ENCODE measurements at regions of chr16 and their contacts with region 1.

Region 1: GRCh38 chr16:49876716-49877129 is 20.8 kb upstream of the ZNF423 start:
- DNase-seq: no peak
- H3K4me3 ChIP-seq: no peak overlapping the region
- H3K27me3 ChIP-seq: peaks cover 13% of the 10 kb centered on the region
- CTCF ChIP-seq: peak; percentile 79

Region 2: DNA sequence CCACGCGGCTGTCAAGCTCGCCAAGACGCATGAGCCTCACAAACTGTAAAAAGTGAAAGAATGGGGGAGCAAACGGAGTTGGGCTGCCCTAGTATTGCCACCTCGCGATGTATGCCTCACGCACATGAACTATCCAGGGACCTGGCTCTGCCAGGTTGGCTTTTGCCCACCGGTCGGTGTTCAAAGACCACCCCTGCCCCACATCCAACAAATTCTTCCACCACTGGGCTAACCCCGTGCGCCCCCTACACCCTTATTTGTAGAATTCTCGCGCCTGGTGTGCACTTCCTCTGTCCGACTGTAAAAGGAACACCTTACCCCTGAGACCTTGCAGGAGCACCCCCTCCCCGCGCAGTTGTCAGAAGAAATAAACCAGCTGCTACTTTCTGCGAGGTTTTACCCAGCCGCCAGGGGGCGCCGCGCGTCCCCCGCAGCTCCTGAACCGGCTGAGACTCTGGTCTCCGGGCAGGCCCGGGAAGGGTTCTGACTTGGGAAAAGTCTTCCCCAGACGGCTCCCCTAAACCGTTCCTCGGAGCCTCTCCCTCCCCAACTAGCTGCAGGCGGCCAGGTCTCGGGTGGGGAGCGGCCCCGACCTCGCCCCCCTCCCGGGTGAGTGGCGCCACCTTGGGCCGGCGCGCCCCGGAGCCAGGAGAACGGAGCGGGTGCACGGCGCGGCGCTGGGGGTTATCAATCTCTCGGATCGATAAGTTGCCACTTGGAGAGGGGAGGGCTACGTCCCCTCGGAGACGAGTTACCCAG is 19.1 kb before region 1 on chr16:
- CTCF ChIA-PET with region 1: interaction called, 57 read pairs
- POLR2A ChIA-PET with region 1: no interaction called
- DNase-seq: no peak
- H3K4me3 ChIP-seq: peak overlapping the region; percentile 30
- H3K27me3 ChIP-seq: peaks cover 19% of the 10 kb centered on the region
- CTCF ChIP-seq: peak; percentile 82

Region 3: GRCh38 chr16:50002190-50002589 is 125.5 kb after region 1 on chr16:
- CTCF ChIA-PET with region 1: no interaction called
- POLR2A ChIA-PET with region 1: no interaction called
- DNase-seq: no peak
- H3K4me3 ChIP-seq: no peak overlapping the region
- H3K27me3 ChIP-seq: no peaks in the 10 kb centered on the region
- CTCF ChIP-seq: no peak